Left cardiac atrium (tissue), 4 donors: ENCODE measurements at regions of chr17 and their contacts with region 1.

Region 1: GRCh38 chr17:75430159-75430974 is 24.9 kb upstream of the GRB2 start:
- DNase-seq: peak; percentile 24
- ATAC-seq: peak; percentile 14 to 29

Region 2: DNA sequence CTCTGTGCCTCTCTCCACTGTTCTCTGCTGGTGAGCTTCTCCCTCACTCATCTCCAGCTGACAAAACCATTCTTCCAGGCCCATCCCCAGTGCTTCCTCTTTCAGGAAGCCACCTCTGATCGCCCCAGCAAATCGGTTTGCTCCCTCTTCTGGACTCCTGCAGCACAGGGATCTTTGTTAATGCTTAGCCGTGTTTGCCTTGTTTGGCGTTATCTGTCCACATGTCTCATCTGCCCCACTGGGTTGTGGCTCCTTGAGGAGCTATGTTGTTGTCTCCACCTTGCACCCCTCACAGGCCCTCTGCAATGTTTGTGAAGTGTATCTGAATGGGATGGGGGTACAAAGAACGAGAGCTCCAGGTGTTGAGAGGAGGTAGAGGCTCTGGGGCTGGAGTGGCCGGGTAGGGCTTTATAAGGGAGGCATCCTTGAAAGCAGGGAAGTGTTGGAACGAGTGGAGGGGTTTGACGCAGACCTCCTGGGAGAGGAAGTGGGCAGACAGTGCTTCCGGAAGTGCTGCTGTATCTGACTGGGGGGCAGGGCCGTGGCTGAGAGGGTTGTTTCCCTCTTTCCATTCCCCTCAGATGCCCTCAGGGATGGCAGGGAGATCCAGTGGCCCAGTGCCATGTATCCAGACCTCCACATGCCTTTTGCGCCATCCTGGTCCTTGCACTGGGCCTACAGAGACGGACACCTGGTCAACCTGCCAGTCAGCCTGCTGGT is 57.1 kb after region 1 on chr17:
- intact Hi-C with region 1: loop called in 1 of 2 experiments (anchors 10 kb)
- DNase-seq: no peak
- ATAC-seq: peak; percentile 40 to 46

Region 3: GRCh38 chr17:75515496-75516254 is 85.3 kb after region 1 on chr17 and contains the start of gene CASKIN2:
- intact Hi-C with region 1: loop called (anchors 2 to 10 kb)
- DNase-seq: peak; percentile 97
- ATAC-seq: peak; percentile 89 to 93
- total RNA-seq, gene CASKIN2: 37.7 to 60.2 TPM

Region 4: GRCh38 chr17:75589012-75589918 is 158.9 kb after region 1 on chr17:
- intact Hi-C with region 1: loop called (anchors 2 kb)
- DNase-seq: peak; percentile 97
- ATAC-seq: peak; percentile 89 to 91

Region 5: DNA sequence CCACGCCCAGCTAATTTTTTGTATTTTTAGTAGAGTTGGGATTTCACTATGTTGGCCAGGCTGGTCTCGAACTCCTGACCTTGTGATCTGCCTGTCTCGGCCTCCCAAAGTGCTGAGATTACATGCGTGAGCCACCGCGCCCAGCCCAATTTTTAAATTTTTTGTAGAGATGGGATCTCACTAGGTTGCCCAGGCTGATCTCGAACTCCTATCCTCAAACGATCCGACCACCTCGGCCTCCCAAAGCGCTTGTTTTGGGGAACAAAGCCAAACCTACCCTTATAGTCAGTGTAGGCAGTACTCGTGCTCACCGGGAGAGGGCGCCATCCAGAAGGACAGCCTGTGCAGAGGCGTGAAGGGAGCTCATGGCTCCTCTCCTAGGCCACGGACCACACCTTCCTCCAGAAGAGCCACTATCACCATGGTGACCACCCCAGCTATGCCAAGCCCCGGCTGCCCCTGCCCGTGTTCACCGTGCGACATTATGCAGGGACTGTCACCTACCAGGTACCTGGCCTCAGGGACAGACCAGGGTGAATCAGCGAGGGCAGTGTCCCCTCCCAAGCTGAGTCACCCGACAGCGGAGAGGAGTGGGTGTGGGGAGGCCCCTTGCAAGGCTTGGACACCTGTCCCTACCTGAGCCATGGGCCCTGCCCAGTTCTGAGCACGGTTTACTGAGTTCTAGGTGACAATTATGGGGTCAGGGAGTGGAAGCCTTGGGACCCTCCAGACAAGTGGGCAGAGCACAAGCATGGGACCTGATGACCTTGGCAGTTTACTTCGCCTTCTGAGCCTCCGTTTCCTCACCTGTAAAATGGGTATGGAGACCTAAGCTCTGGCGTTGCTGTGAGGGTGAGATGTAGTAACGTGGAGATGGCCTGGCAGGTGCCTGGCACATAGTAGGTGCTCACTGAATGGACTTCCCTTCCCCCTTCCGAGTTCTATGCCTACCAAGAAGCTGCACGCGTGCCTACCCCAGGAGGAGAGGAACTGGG is 171.0 kb after region 1 on chr17:
- intact Hi-C with region 1: no loop called
- DNase-seq: no peak
- ATAC-seq: peak in 1 of 2 donors; percentile 36

Region 6: GRCh38 chr17:75749545-75750389 is 319.4 kb after region 1 on chr17:
- intact Hi-C with region 1: loop called in 1 of 2 experiments (anchors 10 kb)
- DNase-seq: peak; percentile 91
- ATAC-seq: peak; percentile 65 to 79